ENCODE measurements at regions of chr17 and their contacts with region 1.

Region 1: DNA sequence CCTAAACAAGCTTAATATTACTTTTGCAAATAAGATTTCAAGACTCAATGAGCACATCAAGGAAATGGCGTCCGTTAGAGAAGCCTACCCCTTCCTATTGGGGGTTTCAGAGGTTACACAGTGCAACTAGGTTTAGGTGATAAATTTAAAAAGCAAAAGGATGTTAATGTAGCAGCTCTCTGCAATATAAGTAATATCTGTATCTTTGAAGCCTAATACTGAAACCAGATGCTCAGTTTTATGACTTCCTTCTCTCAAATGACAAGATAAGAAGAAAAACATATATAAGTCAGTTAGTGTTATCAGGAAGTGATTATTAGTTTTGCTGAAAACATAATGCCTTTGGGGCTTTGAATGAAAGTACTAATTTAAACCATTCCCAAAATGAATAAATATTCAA is 54.3 kb upstream of the MED13 start:
- DNase-seq: no peak
- H3K4me3 ChIP-seq: no peak overlapping the region
- H3K27ac ChIP-seq: no peak overlapping the region
- H3K27me3 ChIP-seq: peaks cover 2% of the 10 kb centered on the region
- CTCF ChIP-seq: no peak

Region 2: DNA sequence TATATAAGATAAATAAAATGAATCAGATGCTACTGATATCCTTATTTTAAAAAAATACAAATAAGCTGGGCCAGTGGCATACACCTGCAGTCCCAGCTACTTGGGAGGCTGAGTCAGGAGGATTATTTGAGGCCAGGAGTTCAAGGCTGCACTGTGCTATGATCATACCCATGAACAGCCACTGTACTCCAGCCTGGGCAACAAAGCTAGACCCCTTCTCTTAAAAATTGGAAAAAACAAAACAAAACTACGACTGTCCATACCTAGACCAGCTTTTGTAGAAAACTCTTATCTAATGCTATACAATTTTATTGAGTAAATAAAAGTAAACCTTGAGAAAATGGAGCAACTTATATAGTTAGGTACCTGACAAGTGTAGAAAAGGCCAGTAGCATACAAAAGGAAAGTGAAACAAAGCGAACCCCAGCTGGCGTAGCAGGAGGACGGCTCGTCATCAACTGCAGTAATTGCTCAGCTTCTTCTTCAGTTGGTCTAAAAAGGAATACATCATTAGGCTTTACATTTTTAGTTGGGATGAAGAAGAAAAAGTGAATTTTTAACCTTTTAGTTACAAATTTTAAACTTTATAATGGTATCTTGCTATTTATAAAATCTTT is 215.2 kb before region 1 on chr17:
- CTCF ChIA-PET with region 1: interaction called, 11 read pairs
- POLR2A ChIA-PET with region 1: no interaction called
- DNase-seq: no peak
- H3K4me3 ChIP-seq: no peak overlapping the region
- H3K27ac ChIP-seq: no peak overlapping the region
- H3K27me3 ChIP-seq: no peaks in the 10 kb centered on the region
- CTCF ChIP-seq: no peak

Measured in AG04450 (cell line).